ENCODE measurements at regions of chr19 and their contacts with region 1.

Region 1: DNA sequence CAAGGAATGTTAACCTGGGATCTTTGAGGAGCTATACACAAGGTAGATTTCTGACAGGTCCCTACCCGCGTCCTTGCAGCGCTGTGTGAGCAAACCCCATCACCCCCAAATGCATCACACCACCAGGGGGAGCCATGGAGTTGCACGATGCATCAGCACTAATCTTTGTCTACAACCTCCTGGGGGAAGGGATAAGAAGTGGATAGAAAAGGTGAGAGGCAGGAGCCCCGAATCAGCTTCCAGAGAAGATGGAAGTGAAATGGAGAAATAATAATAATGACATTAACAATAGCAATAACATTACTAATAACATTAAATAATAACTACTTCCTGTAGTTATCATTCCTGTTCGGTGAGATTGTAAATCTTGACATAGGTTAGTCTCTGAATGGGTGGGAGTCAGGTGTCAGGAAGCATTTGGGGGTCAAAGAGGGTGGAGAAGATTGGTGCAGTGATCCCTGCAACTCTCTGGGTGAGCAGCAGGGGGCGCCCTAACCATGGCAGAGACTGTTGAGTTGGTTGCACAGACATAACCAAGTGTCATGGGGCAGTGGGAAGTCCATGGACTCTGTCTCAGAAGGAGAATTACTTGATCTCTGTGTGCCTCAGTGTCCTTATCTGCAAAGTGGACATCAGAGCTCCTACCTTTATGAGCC is 16.5 kb downstream of the SIGLEC7 start:
- DNase-seq: peak; percentile 91
- H3K4me3 Mint-ChIP-seq: no peak overlapping the region
- H3K27ac Mint-ChIP-seq: no peak overlapping the region
- H3K4me1 Mint-ChIP-seq: peaks cover 6% of the 10 kb centered on the region
- H3K27me3 Mint-ChIP-seq: no peaks in the 10 kb centered on the region

Region 2: GRCh38 chr19:51047031-51047335 is 111.6 kb before region 1 on chr19:
- CTCF ChIA-PET with region 1: no interaction called
- intact Hi-C with region 1: no loop called
- DNase-seq: no peak
- H3K4me3 Mint-ChIP-seq: no peak overlapping the region
- H3K27ac Mint-ChIP-seq: no peak overlapping the region
- H3K4me1 Mint-ChIP-seq: no peaks in the 10 kb centered on the region
- H3K27me3 Mint-ChIP-seq: peaks cover 10% of the 10 kb centered on the region

Region 3: DNA sequence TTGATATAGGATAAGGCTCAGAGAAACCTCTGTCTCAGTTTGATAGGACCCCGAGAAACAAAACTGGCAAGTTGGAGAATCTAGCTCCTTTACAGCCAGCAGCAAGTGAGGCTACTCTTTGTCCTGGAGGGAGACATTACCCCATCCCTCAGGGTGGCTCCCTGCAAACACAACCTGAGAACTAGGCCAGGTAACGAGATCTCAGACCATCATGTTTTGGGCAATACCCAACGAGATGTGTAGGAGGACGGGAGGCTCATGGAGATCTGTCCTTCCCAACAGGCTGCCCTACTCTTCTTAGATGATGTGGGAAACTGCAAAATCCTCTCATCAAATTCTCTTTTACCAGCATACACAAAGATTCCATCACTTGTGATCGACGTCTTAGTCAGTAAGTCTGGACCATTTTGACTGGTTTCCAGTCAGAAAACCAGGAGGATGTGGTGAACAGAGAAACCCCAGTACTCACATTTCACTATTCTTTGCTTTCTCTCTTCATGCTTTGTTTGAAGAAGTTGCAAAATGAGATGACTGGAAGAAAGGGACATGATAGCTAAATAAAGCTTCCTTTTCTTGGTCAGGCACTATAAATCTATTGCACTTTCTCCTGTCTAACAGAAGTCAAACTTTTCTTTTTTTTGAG is 44.4 kb before region 1 on chr19:
- CTCF ChIA-PET with region 1: interaction called, 5 read pairs
- intact Hi-C with region 1: loop called (anchors 2 kb)
- DNase-seq: peak; percentile 61
- H3K4me3 Mint-ChIP-seq: no peak overlapping the region
- H3K27ac Mint-ChIP-seq: no peak overlapping the region
- H3K4me1 Mint-ChIP-seq: peaks cover 27% of the 10 kb centered on the region
- H3K27me3 Mint-ChIP-seq: no peaks in the 10 kb centered on the region

Region 4: DNA sequence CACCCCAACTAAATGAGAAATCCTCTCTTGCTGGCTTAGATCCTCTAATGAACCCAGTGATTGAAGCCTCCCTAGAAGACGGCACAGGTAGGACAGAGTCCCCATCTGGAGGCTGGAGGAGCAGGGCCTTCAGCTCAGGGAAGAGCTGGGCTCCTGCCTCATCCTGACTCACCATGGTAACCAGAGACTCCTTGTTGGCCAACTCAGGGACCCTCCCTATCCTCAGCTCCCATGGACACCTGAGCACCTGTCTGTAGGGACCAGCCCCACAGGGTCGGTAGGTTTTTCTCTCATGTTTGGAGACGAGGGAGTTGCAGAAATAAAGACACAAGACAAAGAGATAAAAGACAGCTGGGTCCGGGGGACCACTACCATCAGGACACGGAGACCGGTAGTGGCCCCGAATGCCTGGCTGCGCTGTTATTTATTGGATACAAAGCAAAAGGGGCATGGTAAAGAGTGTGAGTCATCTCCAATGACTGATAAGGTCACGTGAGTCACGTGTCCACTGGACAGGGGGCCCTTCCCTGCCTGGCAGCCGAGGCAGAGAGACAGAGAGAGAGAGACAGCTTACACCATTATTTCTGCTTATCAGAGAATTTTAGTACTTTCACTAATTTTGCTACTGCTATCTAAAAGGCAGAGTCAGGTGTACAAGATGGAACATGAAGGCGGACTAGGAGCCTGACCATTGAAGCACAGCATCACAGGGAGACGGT is 10.1 kb after region 1 on chr19:
- CTCF ChIA-PET with region 1: interaction called, 5 read pairs
- intact Hi-C with region 1: loop called (anchors 1 kb)
- DNase-seq: no peak
- H3K4me3 Mint-ChIP-seq: no peak overlapping the region
- H3K27ac Mint-ChIP-seq: no peak overlapping the region
- H3K4me1 Mint-ChIP-seq: peaks cover 18% of the 10 kb centered on the region
- H3K27me3 Mint-ChIP-seq: peaks cover 4% of the 10 kb centered on the region

Region 5: DNA sequence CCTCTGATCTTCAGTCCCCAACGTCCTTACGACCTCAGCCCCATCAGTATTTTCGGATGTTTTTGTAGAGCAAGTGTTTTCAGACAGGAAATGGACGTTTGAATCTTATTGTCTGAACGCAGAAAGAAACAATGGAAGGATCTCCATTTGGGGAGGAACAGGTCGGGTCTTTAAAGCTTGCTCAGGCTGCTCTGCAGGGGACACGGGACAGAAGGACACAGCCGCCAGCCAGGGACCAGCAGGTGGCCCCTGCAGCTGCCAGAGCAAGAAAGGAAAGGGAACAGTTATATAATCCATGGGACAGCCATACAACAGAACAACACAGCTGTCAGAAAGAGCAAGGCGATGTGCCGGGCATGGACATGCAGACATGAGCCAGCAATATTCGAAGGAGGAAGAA is 134.4 kb after region 1 on chr19:
- CTCF ChIA-PET with region 1: no interaction called
- intact Hi-C with region 1: no loop called
- DNase-seq: no peak
- H3K4me3 Mint-ChIP-seq: no peak overlapping the region
- H3K27ac Mint-ChIP-seq: no peak overlapping the region
- H3K4me1 Mint-ChIP-seq: no peaks in the 10 kb centered on the region
- H3K27me3 Mint-ChIP-seq: peaks cover 8% of the 10 kb centered on the region

Region 6: GRCh38 chr19:51327066-51328001 is 168.7 kb after region 1 on chr19:
- CTCF ChIA-PET with region 1: interaction called, 3 read pairs
- intact Hi-C with region 1: loop called (anchors 2 kb)
- DNase-seq: peak; percentile 75
- H3K4me3 Mint-ChIP-seq: peak overlapping the region; percentile 39
- H3K27ac Mint-ChIP-seq: no peak overlapping the region
- H3K4me1 Mint-ChIP-seq: peaks cover 5% of the 10 kb centered on the region
- H3K27me3 Mint-ChIP-seq: peaks cover 57% of the 10 kb centered on the region

Region 7: GRCh38 chr19:51660975-51661600 is 502.5 kb after region 1 on chr19:
- CTCF ChIA-PET with region 1: no interaction called
- intact Hi-C with region 1: loop called (anchors 1 kb)
- DNase-seq: peak; percentile 89
- H3K4me3 Mint-ChIP-seq: no peak overlapping the region
- H3K27ac Mint-ChIP-seq: no peak overlapping the region
- H3K4me1 Mint-ChIP-seq: peaks cover 5% of the 10 kb centered on the region
- H3K27me3 Mint-ChIP-seq: peaks cover 19% of the 10 kb centered on the region

Measured in activated naive CD4-positive, alpha-beta T cell treated with anti-CD3 and anti-CD28 coated beads for 36 hours (primary cell).